Right lobe of liver (tissue), 6 donors: ENCODE measurements at regions of chr6 and their contacts with region 1.

Region 1: DNA sequence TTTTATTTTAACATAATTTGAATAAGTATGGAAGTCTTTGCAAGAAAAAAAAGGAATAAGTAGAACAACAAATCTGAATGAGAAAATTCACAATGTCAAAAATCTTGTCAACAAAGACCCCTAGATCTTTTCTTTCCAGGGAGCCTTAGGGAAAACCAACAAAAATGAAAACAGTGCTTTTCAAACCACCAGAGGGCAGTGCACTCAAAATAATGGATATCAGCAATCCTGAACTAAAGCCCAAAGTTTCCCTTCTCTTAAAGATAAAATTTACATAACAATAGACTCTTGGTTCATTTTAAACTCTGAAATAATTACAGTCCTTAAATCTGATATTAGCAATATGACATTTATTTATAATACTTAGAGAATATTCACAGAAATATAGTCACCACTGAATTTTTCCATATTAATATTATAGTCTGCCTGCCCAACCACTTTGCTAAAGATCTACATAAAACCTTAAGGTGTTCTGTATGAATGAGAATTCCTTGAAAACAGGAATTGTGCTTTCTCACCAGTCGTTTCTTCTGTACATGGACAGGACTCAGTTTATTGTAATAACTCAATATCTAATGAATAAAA is 105.3 kb upstream of the BMP5 start:
- DNase-seq: no peak
- ATAC-seq: peak in 3 of 4 donors; percentile 55 to 73 (median 69)
- H3K4me3 ChIP-seq: no peak overlapping the region
- H3K27ac ChIP-seq: no peak overlapping the region
- H3K4me1 ChIP-seq: no peaks in the 10 kb centered on the region
- H3K27me3 ChIP-seq: no peaks in the 10 kb centered on the region
- CTCF ChIP-seq: peak; percentile 68 to 80 (median 70)
- POLR2A ChIP-seq: no peak

Region 2: GRCh38 chr6:55898342-55898741 is 82.4 kb before region 1 on chr6:
- intact Hi-C with region 1: no loop called
- DNase-seq: no peak
- ATAC-seq: no peak
- H3K4me3 ChIP-seq: no peak overlapping the region
- H3K27ac ChIP-seq: no peak overlapping the region
- H3K4me1 ChIP-seq: no peaks in the 10 kb centered on the region
- H3K27me3 ChIP-seq: no peaks in the 10 kb centered on the region
- CTCF ChIP-seq: no peak
- POLR2A ChIP-seq: no peak

Region 3: GRCh38 chr6:56279346-56280080 is 298.8 kb after region 1 on chr6:
- intact Hi-C with region 1: loop called in 1 of 2 experiments (anchors 10 kb)
- DNase-seq: no peak
- ATAC-seq: no peak
- H3K4me3 ChIP-seq: no peak overlapping the region
- H3K27ac ChIP-seq: no peak overlapping the region
- H3K4me1 ChIP-seq: no peaks in the 10 kb centered on the region
- H3K27me3 ChIP-seq: no peaks in the 10 kb centered on the region
- CTCF ChIP-seq: no peak
- POLR2A ChIP-seq: no peak

Region 4: DNA sequence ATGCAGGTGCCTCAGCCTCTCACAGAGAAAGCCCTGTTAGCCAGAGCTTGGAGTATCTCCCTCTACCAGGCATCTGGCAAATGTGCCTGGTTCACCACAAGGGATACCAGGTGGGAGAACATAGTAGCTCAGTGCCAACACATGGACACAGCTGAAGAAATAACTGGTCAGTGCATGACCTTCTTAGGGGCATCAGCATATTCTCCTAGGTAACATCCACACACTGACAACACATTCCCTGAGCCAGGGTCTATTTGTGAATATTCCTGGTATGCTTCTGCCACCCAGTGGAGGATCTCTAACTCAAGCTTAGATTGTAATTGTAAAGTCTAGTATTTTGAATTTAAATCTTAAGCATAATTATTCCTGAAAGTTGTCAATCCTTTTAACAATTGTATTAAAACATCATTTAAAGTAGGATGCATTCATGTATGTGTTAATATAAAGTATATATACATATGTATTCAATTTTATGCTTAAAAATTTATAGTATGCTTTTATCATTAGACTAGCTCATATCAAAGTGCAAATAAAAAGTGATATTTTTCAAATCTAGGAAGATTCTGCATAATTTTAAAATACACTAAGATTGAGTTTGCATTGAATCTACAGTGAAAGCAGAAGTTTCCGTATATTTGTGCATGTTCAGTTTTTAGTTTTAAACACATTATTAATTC is 311.9 kb after region 1 on chr6:
- intact Hi-C with region 1: loop called (anchors 5 to 10 kb)
- DNase-seq: no peak
- ATAC-seq: peak; percentile 61 to 92 (median 83)
- H3K4me3 ChIP-seq: no peak overlapping the region
- H3K27ac ChIP-seq: no peak overlapping the region
- H3K4me1 ChIP-seq: no peaks in the 10 kb centered on the region
- H3K27me3 ChIP-seq: no peaks in the 10 kb centered on the region
- CTCF ChIP-seq: peak; percentile 57 to 72 (median 60)
- POLR2A ChIP-seq: no peak